ENCODE measurements at regions of chr1 and their contacts with region 1.

Region 1: DNA sequence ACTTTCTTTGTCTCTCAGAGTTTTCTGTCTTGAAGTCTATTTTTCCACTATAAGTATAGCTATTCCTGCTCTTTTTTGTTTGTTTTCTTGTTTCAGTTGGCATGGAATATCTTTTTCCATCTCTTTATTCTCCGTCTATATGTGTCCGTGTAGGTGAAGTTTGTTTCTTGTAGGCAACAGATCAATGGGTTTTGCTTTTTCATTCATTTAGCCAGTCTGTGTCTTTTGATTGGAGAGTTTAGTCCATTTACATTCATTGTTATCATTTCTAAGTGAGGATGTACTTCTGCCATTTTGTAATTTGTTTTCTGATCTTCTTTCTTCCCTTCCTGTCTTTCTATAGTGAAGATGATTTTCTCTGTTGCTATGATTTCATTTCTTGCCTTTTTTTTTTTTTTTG is 132.5 kb upstream of the GPR52 start:
- DNase-seq: no peak

Region 2: DNA sequence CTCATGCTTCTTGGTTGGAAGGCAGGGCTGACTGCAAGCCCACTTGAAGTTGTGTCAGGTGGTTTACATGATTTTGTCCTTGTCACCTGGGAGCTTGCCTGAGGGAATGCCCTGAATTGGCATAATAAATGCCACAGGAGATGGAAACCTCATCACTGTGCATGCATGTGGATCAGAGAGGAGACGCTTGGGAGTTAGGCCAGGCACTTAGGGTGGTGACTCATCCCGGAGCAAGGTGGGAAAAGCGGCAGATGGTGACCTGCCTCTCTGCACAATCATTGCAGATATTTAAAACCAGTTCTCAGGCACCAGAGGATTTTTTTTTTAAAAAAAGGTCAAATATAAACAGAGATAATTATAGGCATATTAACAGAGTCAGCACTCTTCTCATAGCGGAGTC is 1079.5 kb after region 1 on chr1:
- intact Hi-C with region 1: loop called in 1 of 2 experiments (anchors 5 kb)
- DNase-seq: no peak

Measured in posterior vena cava (tissue), 2 donors.